ENCODE measurements at regions of chr7 and their contacts with region 1.

Region 1: GRCh38 chr7:2049782-2050510 is 182.8 kb downstream of the MAD1L1 start:
- DNase-seq: no peak
- H3K4me3 ChIP-seq: no peak overlapping the region
- H3K27ac ChIP-seq: no peak overlapping the region
- H3K27me3 ChIP-seq: no peaks in the 10 kb centered on the region
- CTCF ChIP-seq: no peak

Region 2: GRCh38 chr7:2004841-2005725 is 44.9 kb before region 1 on chr7:
- intact Hi-C with region 1: loop called in 1 of 2 experiments (anchors 5 kb)
- DNase-seq: peak in 6 of 10 donors; percentile 2 to 37 (median 28)
- H3K4me3 ChIP-seq: no peak overlapping the region
- H3K27ac ChIP-seq: no peak overlapping the region
- H3K27me3 ChIP-seq: no peaks in the 10 kb centered on the region
- CTCF ChIP-seq: no peak

Measured in dorsolateral prefrontal cortex (tissue), 120 donors.